Spleen (tissue), 13 donors: ENCODE measurements at regions of chr2 and their contacts with region 1.

Region 1: DNA sequence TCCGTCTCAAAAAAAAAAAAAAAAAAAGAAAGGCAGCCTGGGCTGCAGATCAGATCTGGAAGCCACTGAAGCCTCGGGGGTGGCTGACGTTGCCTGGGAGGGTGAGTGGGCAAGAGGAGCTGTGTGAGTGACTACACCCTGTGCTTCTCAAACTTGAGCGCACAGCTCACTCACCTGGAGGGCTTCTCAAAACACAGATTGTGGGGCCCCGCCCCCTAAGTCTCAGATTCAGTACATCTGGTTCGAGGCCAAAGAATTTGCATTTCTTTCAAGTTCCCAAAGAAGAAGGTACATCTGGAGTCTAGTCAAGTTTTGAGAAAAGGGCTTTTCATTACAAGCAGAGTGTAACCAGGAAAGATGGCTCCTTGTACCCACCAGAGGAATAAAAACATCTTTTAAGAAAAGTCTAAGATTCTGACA is 97.7 kb upstream of the CAB39 start:
- DNase-seq: peak; percentile 89
- H3K4me3 ChIP-seq: peak overlapping the region in 1 of 8 donors; percentile 24
- H3K27ac ChIP-seq: peak overlapping the region in 4 of 8 donors; percentile 43 to 64 (median 58)
- H3K4me1 ChIP-seq: peaks cover 0 to 41% (median 17%) of the 10 kb centered on the region in 6 donors
- H3K27me3 ChIP-seq: no peaks in the 10 kb centered on the region
- CTCF ChIP-seq: no peak
- POLR2A ChIP-seq: no peak

Region 2: GRCh38 chr2:230007931-230008707 is 606.8 kb before region 1 on chr2:
- intact Hi-C with region 1: loop called (anchors 2 kb)
- DNase-seq: peak; percentile 93
- H3K4me3 ChIP-seq: peak overlapping the region in 1 of 8 donors; percentile 49
- H3K27ac ChIP-seq: no peak overlapping the region
- H3K4me1 ChIP-seq: peaks cover 0 to 16% (median 9%) of the 10 kb centered on the region in 6 donors
- H3K27me3 ChIP-seq: no peaks in the 10 kb centered on the region
- CTCF ChIP-seq: peak; percentile 41 to 86 (median 74)
- POLR2A ChIP-seq: no peak

Region 3: GRCh38 chr2:230824406-230824978 is 209.6 kb after region 1 on chr2:
- intact Hi-C with region 1: no loop called
- DNase-seq: no peak
- H3K4me3 ChIP-seq: peak overlapping the region in 1 of 8 donors; percentile 34
- H3K27ac ChIP-seq: no peak overlapping the region
- H3K4me1 ChIP-seq: peaks cover 6 to 25% (median 19%) of the 10 kb centered on the region in 6 donors
- H3K27me3 ChIP-seq: peaks cover 0 to 50% (median 37%) of the 10 kb centered on the region in 7 donors
- CTCF ChIP-seq: peak; percentile 36 to 86 (median 69)
- POLR2A ChIP-seq: no peak